CD4-positive, alpha-beta T cell (primary cell): ENCODE measurements at regions of chr6 and their contacts with region 1.

Region 1: GRCh38 chr6:130885392-130886192 is 58.4 kb downstream of the SMLR1 start:
- DNase-seq: peak; percentile 18 to 88 (median 70)
- ATAC-seq: peak; percentile 92
- H3K4me3 ChIP-seq: no peak overlapping the region
- H3K4me3 Mint-ChIP-seq: no peak overlapping the region
- H3K27ac ChIP-seq: no peak overlapping the region
- H3K27ac Mint-ChIP-seq: no peak overlapping the region
- H3K4me1 ChIP-seq: no peaks in the 10 kb centered on the region
- H3K4me1 Mint-ChIP-seq: no peaks in the 10 kb centered on the region
- H3K27me3 ChIP-seq: no peaks in the 10 kb centered on the region
- H3K27me3 Mint-ChIP-seq: no peaks in the 10 kb centered on the region
- CTCF ChIP-seq: peak; percentile 99

Region 2: GRCh38 chr6:130872250-130873095 is 13.1 kb before region 1 on chr6:
- CTCF ChIA-PET with region 1: interaction called, 11 read pairs
- POLR2A ChIA-PET with region 1: no interaction called
- intact Hi-C with region 1: no loop called
- DNase-seq: peak; percentile 51 to 79 (median 66)
- ATAC-seq: peak; percentile 49
- H3K4me3 ChIP-seq: no peak overlapping the region
- H3K4me3 Mint-ChIP-seq: no peak overlapping the region
- H3K27ac ChIP-seq: no peak overlapping the region
- H3K27ac Mint-ChIP-seq: no peak overlapping the region
- H3K4me1 ChIP-seq: no peaks in the 10 kb centered on the region
- H3K4me1 Mint-ChIP-seq: no peaks in the 10 kb centered on the region
- H3K27me3 ChIP-seq: no peaks in the 10 kb centered on the region
- H3K27me3 Mint-ChIP-seq: no peaks in the 10 kb centered on the region
- CTCF ChIP-seq: peak; percentile 87

Region 3: DNA sequence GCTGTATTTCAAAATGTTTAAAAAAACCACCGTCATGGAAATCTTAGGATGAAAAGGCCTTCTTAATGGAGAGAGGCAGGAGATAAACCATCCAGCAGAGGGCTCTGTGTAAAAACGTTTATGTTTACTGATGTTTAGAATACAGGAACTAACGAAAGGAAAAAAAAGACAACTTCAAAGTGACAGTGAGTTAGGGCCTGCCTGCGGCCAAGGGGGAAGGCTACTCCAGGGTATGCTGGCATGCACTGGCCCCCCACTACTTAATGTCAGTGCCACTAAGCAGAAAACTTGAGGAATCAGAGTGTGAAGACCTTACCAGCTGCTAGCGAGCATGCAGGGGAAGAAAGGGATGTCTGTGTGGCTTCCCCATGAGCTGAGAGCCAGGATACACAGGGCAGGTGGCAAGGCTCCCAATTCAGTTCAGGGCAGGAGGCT is 297.4 kb after region 1 on chr6:
- CTCF ChIA-PET with region 1: interaction called, 4 read pairs
- POLR2A ChIA-PET with region 1: no interaction called
- intact Hi-C with region 1: loop called in 1 of 2 experiments (anchors 5 kb)
- DNase-seq: peak in 6 of 14 experiments; percentile 0 to 71 (median 57)
- ATAC-seq: peak; percentile 91
- H3K4me3 ChIP-seq: no peak overlapping the region
- H3K4me3 Mint-ChIP-seq: peak overlapping the region; percentile 81
- H3K27ac ChIP-seq: no peak overlapping the region
- H3K27ac Mint-ChIP-seq: peak overlapping the region; percentile 87
- H3K4me1 ChIP-seq: peaks cover 12% of the 10 kb centered on the region
- H3K4me1 Mint-ChIP-seq: peaks cover 20% of the 10 kb centered on the region
- H3K27me3 ChIP-seq: no peaks in the 10 kb centered on the region
- H3K27me3 Mint-ChIP-seq: no peaks in the 10 kb centered on the region
- CTCF ChIP-seq: peak; percentile 81

Region 4: DNA sequence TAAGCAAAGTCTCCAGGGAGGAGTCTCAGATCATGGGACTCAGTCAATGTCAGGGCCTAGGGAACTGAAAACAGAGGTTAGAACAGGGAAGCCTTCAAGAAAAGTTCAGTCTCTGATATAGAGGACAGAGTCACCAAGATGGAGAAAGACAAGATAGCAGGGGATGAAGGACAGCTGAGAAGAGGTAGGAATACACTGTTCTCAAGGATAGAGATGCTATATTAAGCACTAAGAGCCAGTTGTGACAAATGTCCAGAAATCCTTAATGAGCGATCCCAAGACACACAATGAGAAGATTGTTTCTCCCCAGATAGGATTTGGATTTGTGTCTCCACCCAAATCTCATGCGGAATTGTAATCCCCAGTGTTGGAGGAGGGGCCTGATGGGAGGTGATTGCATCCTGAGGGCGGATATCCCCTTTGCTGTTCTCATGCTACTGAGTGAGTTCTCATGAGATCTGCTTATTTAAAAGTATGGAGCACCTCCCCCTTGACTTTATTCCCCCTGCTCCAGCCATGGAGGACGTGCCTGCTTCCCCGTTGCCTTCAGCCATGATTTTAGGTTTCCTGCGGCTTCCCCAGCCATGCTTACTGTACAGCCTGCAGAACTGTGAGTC is 417.9 kb after region 1 on chr6:
- CTCF ChIA-PET with region 1: no interaction called
- POLR2A ChIA-PET with region 1: no interaction called
- intact Hi-C with region 1: loop called in 1 of 2 experiments (anchors 10 kb)
- DNase-seq: no peak
- ATAC-seq: no peak
- H3K4me3 ChIP-seq: no peak overlapping the region
- H3K4me3 Mint-ChIP-seq: no peak overlapping the region
- H3K27ac ChIP-seq: no peak overlapping the region
- H3K27ac Mint-ChIP-seq: peak overlapping the region; percentile 16
- H3K4me1 ChIP-seq: peaks cover 4% of the 10 kb centered on the region
- H3K4me1 Mint-ChIP-seq: peaks cover 16% of the 10 kb centered on the region
- H3K27me3 ChIP-seq: no peaks in the 10 kb centered on the region
- H3K27me3 Mint-ChIP-seq: no peaks in the 10 kb centered on the region
- CTCF ChIP-seq: no peak

Region 5: DNA sequence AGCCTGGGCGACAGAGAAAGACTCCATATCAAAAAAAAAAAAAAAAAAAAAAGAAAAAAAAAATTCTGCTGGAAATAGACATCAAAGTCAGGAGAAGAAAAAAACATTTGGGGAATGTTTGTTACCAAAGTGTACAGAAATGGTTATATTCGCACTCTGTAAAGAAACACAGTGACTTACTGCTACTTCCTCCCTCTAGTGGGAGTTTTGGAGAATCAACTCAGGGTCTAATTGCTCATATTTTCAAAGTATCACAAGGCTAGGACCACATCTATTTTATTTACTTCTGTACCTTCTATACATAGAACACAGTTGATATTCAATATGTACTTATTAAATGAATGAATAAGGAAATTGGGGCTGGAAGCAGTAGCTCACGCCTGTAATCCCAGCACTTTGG is 711.9 kb after region 1 on chr6:
- CTCF ChIA-PET with region 1: interaction called, 3 read pairs
- POLR2A ChIA-PET with region 1: no interaction called
- intact Hi-C with region 1: loop called in 1 of 2 experiments (anchors 2 kb)
- DNase-seq: peak in 3 of 14 experiments; percentile 24 to 28 (median 24)
- ATAC-seq: peak; percentile 65
- H3K4me3 ChIP-seq: no peak overlapping the region
- H3K4me3 Mint-ChIP-seq: no peak overlapping the region
- H3K27ac ChIP-seq: peak overlapping the region in 1 of 2 donors; percentile 11
- H3K27ac Mint-ChIP-seq: peak overlapping the region; percentile 27
- H3K4me1 ChIP-seq: no peaks in the 10 kb centered on the region
- H3K4me1 Mint-ChIP-seq: no peaks in the 10 kb centered on the region
- H3K27me3 ChIP-seq: no peaks in the 10 kb centered on the region
- H3K27me3 Mint-ChIP-seq: no peaks in the 10 kb centered on the region
- CTCF ChIP-seq: peak; percentile 24

Region 6: GRCh38 chr6:131909408-131910218 is 1024.0 kb after region 1 on chr6:
- CTCF ChIA-PET with region 1: interaction called, 3 read pairs
- POLR2A ChIA-PET with region 1: no interaction called
- intact Hi-C with region 1: loop called (anchors 2 kb)
- DNase-seq: peak; percentile 41 to 79 (median 62)
- ATAC-seq: peak; percentile 96
- H3K4me3 ChIP-seq: no peak overlapping the region
- H3K4me3 Mint-ChIP-seq: peak overlapping the region; percentile 42
- H3K27ac ChIP-seq: no peak overlapping the region
- H3K27ac Mint-ChIP-seq: no peak overlapping the region
- H3K4me1 ChIP-seq: no peaks in the 10 kb centered on the region
- H3K4me1 Mint-ChIP-seq: peaks cover 8% of the 10 kb centered on the region
- H3K27me3 ChIP-seq: peaks cover 2 to 23% of the 10 kb centered on the region in 2 experiments
- H3K27me3 Mint-ChIP-seq: peaks cover 44% of the 10 kb centered on the region
- CTCF ChIP-seq: peak; percentile 98

Region 7: DNA sequence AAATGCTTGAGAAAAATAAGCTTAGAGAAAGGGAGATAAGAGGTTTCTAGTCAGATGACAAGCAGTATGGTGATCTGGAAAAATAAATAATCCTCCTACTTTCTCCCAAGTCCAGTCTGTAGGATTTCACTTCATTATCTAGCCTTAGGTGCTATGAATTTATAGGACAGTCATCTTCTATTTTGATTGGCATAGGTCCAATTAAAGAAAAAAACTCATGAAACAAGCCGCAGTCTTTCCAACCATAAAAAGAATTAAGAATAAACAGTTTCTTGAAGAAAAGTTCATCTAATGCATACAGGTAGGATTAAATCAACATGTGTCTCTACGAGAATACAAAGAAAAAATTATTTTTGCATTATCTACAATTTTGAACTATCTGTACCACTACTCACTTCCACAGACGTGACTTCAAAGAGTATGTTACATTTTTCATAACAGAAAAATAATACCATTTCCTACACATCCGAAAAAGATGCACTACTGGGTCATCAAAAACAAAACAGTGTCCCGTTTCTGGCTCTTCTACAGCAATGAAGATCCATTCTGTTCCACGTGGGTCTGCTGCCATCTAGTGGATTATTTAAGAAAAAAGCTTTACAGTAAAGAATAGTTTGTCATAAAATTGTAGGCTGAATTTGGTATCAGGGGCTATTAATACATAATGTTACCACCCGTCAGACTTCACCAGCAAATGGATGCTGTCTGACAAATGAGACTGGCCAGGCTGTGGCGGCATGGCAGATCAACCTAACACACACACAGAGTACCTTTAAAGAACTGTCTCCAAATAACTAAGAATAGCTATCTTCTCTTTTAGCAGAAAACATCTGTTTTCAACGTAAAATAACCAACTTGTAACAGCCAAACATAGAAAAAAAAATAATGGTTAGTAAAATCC is 1598.4 kb after region 1 on chr6:
- CTCF ChIA-PET with region 1: no interaction called
- POLR2A ChIA-PET with region 1: no interaction called
- intact Hi-C with region 1: loop called (anchors 10 kb)
- DNase-seq: peak in 11 of 14 experiments; percentile 3 to 80 (median 20)
- ATAC-seq: peak; percentile 67
- H3K4me3 ChIP-seq: no peak overlapping the region
- H3K4me3 Mint-ChIP-seq: no peak overlapping the region
- H3K27ac ChIP-seq: no peak overlapping the region
- H3K27ac Mint-ChIP-seq: no peak overlapping the region
- H3K4me1 ChIP-seq: no peaks in the 10 kb centered on the region
- H3K4me1 Mint-ChIP-seq: peaks cover 26% of the 10 kb centered on the region
- H3K27me3 ChIP-seq: no peaks in the 10 kb centered on the region
- H3K27me3 Mint-ChIP-seq: no peaks in the 10 kb centered on the region
- CTCF ChIP-seq: peak; percentile 90